Activated T-helper 2 cell treated with anti-CD3 and anti-CD28 coated beads, Interferon-gamma antibody, Interleukin-2, Interleukin-4, amounts not matched to agents 10 μg/mL and 5 μg/mL and 100 μg/mL, durations not matched to agents 14 hours and 24 hours and 36 hours (primary cell): ENCODE measurements at regions of chr3 and their contacts with region 1.

Region 1: DNA sequence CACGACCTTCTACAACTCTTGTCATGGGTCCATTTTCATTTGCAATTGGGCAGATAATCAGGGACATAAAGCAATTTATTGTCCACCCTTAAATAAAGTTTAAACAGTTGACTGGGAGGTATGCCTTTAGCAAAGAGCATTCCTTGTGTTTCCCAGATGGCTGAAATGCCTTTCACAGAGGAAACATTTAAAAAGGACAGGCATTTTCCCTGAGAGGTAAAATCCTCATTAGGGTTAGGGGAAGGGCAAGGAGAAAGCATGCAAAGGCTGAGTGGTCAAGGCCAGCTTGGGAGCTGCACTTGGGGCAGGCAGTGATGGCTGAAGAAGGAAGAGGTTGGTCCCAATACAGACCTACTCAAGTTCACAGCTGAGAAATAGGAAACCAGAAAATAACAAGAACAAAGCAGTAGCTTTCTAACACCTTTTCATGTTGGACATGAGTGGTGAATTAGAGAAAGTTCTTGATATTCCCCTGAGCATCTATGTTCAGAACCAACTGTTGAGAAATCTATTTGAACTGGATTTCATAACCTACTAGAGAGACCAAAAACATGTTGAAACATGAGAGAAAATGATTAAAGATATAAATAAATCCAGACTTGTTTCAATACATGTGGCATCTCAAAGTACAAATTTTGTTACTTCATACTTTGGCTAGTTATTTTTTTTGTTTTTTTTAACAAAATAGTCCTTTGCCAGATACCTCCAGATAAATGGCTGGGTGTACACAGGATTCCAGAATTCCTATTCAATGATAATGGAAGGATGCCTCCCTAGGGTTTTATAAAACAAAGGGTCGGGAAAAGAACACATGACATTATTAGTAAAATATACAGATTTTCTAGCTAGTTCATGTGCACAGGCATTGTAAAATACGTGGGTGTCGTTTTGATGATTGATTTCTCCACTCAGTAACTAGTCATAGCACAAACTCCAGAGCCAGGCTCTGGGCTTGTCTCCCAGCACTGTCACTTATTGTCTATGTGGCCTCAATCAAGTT is 34.3 kb upstream of the TNFSF10 start:
- DNase-seq: no peak
- H3K4me3 Mint-ChIP-seq: no peak overlapping the region
- H3K27ac Mint-ChIP-seq: no peak overlapping the region
- H3K4me1 Mint-ChIP-seq: peaks cover 40% of the 10 kb centered on the region
- H3K27me3 Mint-ChIP-seq: no peaks in the 10 kb centered on the region

Region 2: GRCh38 chr3:172517859-172518466 is 39.6 kb before region 1 on chr3:
- intact Hi-C with region 1: loop called (anchors 1 kb)
- DNase-seq: peak; percentile 64
- H3K4me3 Mint-ChIP-seq: peak overlapping the region; percentile 74
- H3K27ac Mint-ChIP-seq: peak overlapping the region; percentile 91
- H3K4me1 Mint-ChIP-seq: peaks cover 70% of the 10 kb centered on the region
- H3K27me3 Mint-ChIP-seq: no peaks in the 10 kb centered on the region